ENCODE measurements at regions of chr20 and their contacts with region 1.

Region 1: GRCh38 chr20:3679749-3680700 is 1.8 kb downstream of the ADAM33 start:
- DNase-seq: no peak
- H3K4me3 ChIP-seq: peak overlapping the region; percentile 85
- H3K27me3 ChIP-seq: no peaks in the 10 kb centered on the region
- CTCF ChIP-seq: no peak

Region 2: GRCh38 chr20:3563548-3564177 is 116.4 kb before region 1 on chr20:
- CTCF ChIA-PET with region 1: interaction called, 18 read pairs
- POLR2A ChIA-PET with region 1: no interaction called
- DNase-seq: no peak
- H3K4me3 ChIP-seq: no peak overlapping the region
- H3K27me3 ChIP-seq: no peaks in the 10 kb centered on the region
- CTCF ChIP-seq: peak; percentile 80

Region 3: GRCh38 chr20:3696200-3696599 is 16.2 kb after region 1 on chr20:
- CTCF ChIA-PET with region 1: interaction called, 31 read pairs
- POLR2A ChIA-PET with region 1: interaction called, 4 read pairs
- DNase-seq: no peak
- H3K4me3 ChIP-seq: no peak overlapping the region
- H3K27me3 ChIP-seq: peaks cover 2% of the 10 kb centered on the region; the same call in 1 of the 2 replicates
- CTCF ChIP-seq: peak; percentile 57

Region 4: DNA sequence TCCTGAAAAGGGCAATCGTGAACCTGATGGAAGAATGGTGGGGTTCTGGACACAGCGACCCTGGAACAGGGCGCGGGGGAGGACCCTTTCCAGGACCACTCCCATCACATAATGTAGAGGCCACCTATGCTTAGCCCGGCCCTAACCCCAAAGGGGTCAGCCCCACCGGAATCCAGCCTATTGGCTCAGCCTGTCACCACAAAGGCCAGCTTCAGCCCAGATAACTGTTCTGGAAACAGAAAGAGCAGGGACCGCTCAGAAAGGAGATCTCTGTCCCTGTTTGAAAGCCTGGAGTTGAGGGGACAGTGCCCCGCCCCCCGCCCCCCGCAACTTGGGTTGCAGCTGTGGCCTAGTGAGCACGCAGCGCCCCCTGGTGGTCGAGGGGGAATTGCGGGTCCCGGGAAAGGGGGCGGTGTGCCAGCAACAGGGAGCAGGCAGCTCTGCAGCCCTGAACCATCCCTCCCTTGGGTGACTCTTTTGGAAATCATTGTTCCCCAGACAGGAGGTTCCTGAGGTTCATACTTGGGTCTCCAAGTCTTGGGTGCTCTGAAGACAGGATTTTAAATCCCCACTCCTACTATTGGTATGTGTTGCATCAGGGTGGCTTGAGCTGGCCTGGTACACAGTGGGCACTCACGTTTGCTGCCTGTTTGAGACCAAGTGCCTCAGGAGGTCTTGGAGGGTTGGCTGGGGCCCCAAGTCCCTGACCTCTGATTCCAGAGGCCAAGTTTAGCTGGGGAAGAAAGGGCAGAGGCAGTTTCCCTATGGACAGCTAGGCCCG is 30.9 kb after region 1 on chr20:
- CTCF ChIA-PET with region 1: interaction called, 331 read pairs
- POLR2A ChIA-PET with region 1: interaction called, 13 read pairs
- DNase-seq: no peak
- H3K4me3 ChIP-seq: no peak overlapping the region
- H3K27me3 ChIP-seq: no peaks in the 10 kb centered on the region; the same call in 1 of the 2 replicates
- CTCF ChIP-seq: peak; percentile 95

Region 5: GRCh38 chr20:3781153-3781910 is 101.3 kb after region 1 on chr20 and contains the start of gene SPEF1:
- CTCF ChIA-PET with region 1: interaction called, 11 read pairs
- POLR2A ChIA-PET with region 1: no interaction called
- DNase-seq: peak; percentile 86
- H3K4me3 ChIP-seq: peak within 1 kb of the TSS; percentile 43
- H3K27me3 ChIP-seq: no peaks in the 10 kb centered on the region
- CTCF ChIP-seq: peak; percentile 60
- polyA plus RNA-seq, gene SPEF1: 0.07 and 0.17 TPM in 2 replicates

Region 6: DNA sequence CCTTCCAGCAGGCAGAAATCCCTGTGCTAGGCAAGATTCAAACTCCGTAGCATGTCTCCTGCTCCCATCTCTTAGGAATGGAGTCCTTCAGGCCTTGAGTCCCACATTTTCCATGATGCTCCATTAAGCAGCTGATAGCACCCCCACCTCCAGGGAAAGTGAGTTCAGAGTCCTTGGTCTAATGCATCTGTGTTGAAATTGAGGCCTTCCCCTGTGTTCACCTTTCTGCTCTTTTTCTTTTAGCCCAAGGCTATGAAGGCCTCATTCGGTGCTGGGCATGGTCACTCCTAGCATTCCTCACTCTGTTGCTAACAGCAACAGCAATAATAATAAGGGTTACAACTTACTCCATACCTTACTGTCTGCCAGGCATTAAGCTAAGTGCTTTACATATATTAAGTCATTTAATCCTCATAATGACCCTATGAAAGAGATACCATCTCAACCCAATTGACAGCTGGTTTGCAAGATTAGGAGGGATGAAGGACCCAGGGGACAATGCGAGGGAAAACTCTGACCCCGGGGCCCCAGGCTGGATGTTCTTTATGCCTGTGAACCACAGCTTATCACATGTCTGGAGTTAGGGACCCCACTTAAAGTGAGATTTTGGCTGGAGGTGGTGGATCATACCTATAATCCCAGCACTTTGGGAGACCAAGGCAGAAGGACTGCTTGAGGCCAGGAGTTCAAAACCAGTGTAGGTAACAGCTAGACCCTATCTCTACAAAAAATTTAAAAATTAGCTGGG is 191.7 kb after region 1 on chr20:
- CTCF ChIA-PET with region 1: no interaction called
- POLR2A ChIA-PET with region 1: no interaction called
- DNase-seq: no peak
- H3K4me3 ChIP-seq: no peak overlapping the region
- H3K27me3 ChIP-seq: no peaks in the 10 kb centered on the region
- CTCF ChIP-seq: no peak

Measured in BJ (cell line).